CD8-positive, alpha-beta T cell (primary cell): ENCODE measurements at regions of chr10 and their contacts with region 1.

Region 1: GRCh38 chr10:29559996-29560395 is 74.8 kb downstream of the SVIL start:
- DNase-seq: no peak
- ATAC-seq: no peak
- H3K4me3 ChIP-seq: no peak overlapping the region
- H3K4me3 Mint-ChIP-seq: no peak overlapping the region
- H3K27ac ChIP-seq: no peak overlapping the region
- H3K27ac Mint-ChIP-seq: peak overlapping the region; percentile 5
- H3K4me1 ChIP-seq: no peaks in the 10 kb centered on the region
- H3K4me1 Mint-ChIP-seq: no peaks in the 10 kb centered on the region
- H3K27me3 ChIP-seq: no peaks in the 10 kb centered on the region
- H3K27me3 Mint-ChIP-seq: no peaks in the 10 kb centered on the region
- CTCF ChIP-seq: no peak

Region 2: DNA sequence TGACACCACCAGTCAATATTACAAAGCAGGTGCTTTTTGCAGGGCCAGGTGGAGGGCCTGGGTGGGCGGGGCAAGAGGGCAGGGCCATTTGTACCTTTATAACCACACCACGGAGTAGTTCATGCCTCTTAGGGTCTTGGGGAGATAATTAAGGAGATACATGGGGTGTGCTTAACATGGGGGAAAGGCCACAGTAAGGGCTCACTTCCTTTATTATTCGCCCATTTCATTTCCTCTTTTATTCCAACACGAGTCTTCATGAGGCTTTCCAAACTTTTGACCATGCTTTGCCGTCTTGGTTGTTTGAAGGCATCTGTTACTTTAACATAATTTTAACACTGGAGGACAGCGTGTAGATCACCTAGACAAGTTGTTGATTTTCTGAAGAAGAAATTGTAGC is 1102.8 kb after region 1 on chr10:
- CTCF ChIA-PET with region 1: no interaction called
- POLR2A ChIA-PET with region 1: no interaction called
- intact Hi-C with region 1: loop called in 1 of 2 experiments (anchors 5 kb)
- DNase-seq: no peak
- ATAC-seq: no peak
- H3K4me3 ChIP-seq: no peak overlapping the region
- H3K4me3 Mint-ChIP-seq: no peak overlapping the region
- H3K27ac ChIP-seq: no peak overlapping the region
- H3K27ac Mint-ChIP-seq: no peak overlapping the region
- H3K4me1 ChIP-seq: no peaks in the 10 kb centered on the region
- H3K4me1 Mint-ChIP-seq: no peaks in the 10 kb centered on the region
- H3K27me3 ChIP-seq: no peaks in the 10 kb centered on the region
- H3K27me3 Mint-ChIP-seq: peaks cover 23% of the 10 kb centered on the region
- CTCF ChIP-seq: no peak